PC-3 (cell line): ENCODE measurements at regions of chr12 and their contacts with region 1.

Region 1: DNA sequence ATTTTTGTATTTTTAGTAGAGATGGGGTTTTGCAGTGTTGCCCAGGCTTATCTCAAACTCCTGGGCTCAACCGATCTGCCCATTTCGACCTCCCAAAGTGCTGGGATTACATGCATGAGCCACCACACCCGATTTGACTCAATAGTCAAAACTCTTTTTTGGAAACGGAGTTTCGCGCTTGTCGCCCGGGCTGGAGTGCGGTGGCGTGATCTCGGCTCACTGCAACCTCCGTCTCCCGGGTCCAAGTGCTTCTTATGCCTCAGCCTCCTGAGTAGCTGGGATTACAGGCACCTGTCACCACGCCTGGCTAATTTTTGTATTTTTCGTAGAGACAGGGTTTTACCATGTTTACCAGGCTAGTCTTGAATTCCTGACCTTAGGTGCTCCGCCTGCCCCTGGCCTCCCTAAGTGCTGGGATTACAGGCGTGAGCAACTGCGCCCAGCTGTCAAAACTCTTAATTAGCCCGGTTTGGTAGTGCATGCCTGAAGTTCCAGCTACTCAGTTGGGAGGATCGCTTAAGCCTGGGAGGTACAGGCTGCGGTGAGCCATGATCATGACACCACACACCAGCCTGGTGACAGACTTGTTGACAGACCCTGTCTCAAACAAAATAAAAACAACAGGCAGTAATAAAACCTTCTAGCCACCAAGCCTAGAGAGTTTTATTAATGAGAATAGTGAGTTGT is 12.4 kb downstream of the MED21 start:
- DNase-seq: no peak
- ATAC-seq: no peak
- H3K4me3 ChIP-seq: no peak overlapping the region
- H3K27ac ChIP-seq: no peak overlapping the region
- H3K4me1 ChIP-seq: no peaks in the 10 kb centered on the region
- H3K27me3 ChIP-seq: no peaks in the 10 kb centered on the region
- CTCF ChIP-seq: no peak

Region 2: DNA sequence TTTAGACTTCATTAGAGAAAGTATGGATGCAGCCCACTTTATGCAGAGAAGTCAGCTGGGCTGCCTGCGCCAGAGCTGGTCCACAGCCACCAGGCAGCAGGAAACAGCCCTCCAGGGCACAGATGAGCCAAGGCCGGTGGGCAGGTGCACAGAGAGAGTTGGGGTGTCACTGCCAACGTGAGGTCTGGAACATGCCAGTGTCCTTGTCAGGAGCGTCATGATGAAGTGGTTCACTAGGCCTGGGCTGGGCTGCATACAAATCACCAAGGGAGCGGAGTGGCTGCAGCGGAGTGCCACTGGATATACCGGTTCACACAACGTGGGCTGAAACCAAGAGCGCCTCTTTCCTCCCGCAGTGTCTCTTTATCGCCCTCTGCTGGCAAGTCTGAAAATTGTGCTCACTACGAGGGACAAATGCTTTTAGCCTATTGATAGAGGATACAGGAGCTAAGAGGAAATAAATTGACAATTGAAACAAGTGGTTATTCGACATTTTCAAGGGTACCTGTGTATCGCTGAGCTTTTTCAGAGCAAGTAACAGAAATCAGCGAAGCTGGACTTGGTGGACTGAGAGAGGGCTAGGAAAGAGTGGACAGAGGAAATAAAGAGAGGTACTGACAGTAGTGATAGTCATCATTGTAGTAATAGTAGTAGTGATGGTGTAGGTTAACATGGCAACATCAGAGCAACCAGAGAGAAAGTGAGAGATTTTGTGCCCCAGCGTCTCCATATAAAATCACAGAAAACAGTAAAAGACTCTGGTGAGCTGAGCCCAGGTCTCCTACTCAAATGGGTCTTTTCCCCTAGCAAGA is 149.8 kb before region 1 on chr12:
- CTCF ChIA-PET with region 1: no interaction called
- POLR2A ChIA-PET with region 1: no interaction called
- intact Hi-C with region 1: no loop called
- DNase-seq: peak; percentile 99
- ATAC-seq: peak; percentile 96
- H3K4me3 ChIP-seq: peak overlapping the region; percentile 42; the same call in 1 of the 2 replicates
- H3K27ac ChIP-seq: no peak overlapping the region
- H3K4me1 ChIP-seq: peaks cover 3% of the 10 kb centered on the region; the same call in 1 of the 2 replicates
- H3K27me3 ChIP-seq: no peaks in the 10 kb centered on the region
- CTCF ChIP-seq: peak; percentile 99

Region 3: GRCh38 chr12:27104546-27104945 is 69.8 kb after region 1 on chr12:
- CTCF ChIA-PET with region 1: no interaction called
- POLR2A ChIA-PET with region 1: no interaction called
- intact Hi-C with region 1: no loop called
- DNase-seq: no peak
- ATAC-seq: no peak
- H3K4me3 ChIP-seq: no peak overlapping the region
- H3K27ac ChIP-seq: no peak overlapping the region
- H3K4me1 ChIP-seq: peaks cover 17% of the 10 kb centered on the region
- H3K27me3 ChIP-seq: no peaks in the 10 kb centered on the region
- CTCF ChIP-seq: no peak

Region 4: DNA sequence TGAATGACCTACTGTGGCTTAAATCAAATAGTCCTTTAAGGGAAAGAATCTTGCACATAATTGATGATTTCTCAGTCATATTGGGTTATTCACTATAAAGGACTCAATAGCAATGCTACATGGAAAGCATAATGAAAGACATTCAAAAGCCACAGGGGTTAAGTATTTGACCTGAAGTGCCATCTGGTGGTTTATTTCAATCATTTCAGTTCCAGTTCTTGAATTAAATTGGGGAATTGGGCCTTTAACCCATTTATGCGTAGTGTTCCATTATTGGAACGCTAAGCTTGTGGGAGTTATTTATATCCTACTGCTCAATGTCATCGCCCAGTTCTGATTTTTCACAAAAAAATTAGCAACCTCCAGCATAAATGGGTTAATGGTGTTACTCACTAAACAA is 88.9 kb after region 1 on chr12:
- CTCF ChIA-PET with region 1: no interaction called
- POLR2A ChIA-PET with region 1: no interaction called
- intact Hi-C with region 1: loop called (anchors 1 kb)
- DNase-seq: peak; percentile 58
- ATAC-seq: peak; percentile 67
- H3K4me3 ChIP-seq: no peak overlapping the region
- H3K27ac ChIP-seq: no peak overlapping the region
- H3K4me1 ChIP-seq: no peaks in the 10 kb centered on the region
- H3K27me3 ChIP-seq: no peaks in the 10 kb centered on the region
- CTCF ChIP-seq: peak; percentile 66

Region 5: DNA sequence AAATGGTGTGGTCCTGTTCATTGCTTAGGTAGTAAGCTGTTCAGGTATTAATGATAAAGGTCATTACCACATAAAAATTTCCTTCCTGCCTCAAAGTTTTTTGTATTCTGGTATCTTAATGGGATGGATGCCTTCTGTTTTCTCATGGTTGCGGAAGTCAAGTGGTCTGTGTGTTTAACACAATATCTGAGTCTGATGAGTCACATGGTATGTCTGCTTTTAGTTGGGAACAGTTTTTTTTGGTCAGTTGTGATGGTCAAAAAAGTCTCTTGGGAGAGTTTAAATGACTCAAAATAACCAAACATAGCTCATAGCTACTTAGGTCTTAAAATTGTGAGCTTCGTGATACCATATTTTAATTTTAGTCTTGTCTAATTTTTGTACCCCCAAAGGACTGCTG is 250.0 kb after region 1 on chr12:
- CTCF ChIA-PET with region 1: no interaction called
- POLR2A ChIA-PET with region 1: no interaction called
- intact Hi-C with region 1: no loop called
- DNase-seq: peak; percentile 57
- ATAC-seq: peak; percentile 74
- H3K4me3 ChIP-seq: no peak overlapping the region
- H3K27ac ChIP-seq: peak overlapping the region; percentile 9
- H3K4me1 ChIP-seq: peaks cover 17% of the 10 kb centered on the region
- H3K27me3 ChIP-seq: no peaks in the 10 kb centered on the region
- CTCF ChIP-seq: no peak

Region 6: GRCh38 chr12:27383429-27384260 is 348.9 kb after region 1 on chr12:
- CTCF ChIA-PET with region 1: no interaction called
- POLR2A ChIA-PET with region 1: interaction called, 6 read pairs
- intact Hi-C with region 1: loop called (anchors 5 kb)
- DNase-seq: peak; percentile 98
- ATAC-seq: peak; percentile 86
- H3K4me3 ChIP-seq: no peak overlapping the region
- H3K27ac ChIP-seq: peak overlapping the region; percentile 72
- H3K4me1 ChIP-seq: peaks cover 24% of the 10 kb centered on the region
- H3K27me3 ChIP-seq: no peaks in the 10 kb centered on the region
- CTCF ChIP-seq: peak; percentile 98